ENCODE measurements at regions of chr7 and their contacts with region 1.

Region 1: DNA sequence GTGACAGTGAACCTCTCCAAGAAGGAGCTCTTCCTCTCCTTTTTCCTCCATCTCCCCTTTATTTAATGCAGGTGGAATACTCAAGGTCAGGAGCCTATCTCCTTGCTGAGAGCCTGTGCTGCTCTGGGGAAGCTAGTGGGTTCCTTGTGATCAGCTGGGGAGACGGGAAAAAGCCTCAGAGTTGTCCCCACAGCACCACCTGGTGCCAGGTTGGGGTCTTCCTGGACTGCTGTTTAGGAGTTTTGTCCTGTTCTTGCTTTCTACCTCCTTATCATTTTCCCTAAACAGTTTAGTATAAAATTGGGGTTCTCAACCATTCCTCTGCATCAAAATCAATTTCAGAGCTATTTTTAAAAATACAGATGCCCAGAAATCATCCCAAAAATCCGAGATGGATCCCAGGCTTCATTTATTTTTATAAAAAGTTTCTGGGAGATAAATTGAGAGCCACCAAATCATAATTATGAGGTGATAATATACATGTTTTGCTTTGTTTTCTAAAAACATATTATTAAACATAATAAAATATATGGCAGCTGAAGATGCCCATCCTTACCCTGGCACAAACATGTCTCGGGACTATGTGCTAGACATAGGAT is 44.3 kb downstream of the MACC1 start:
- DNase-seq: peak; percentile 70 to 72
- H3K4me3 ChIP-seq: no peak overlapping the region
- H3K27ac ChIP-seq: no peak overlapping the region
- H3K4me1 ChIP-seq: no peaks in the 10 kb centered on the region
- H3K27me3 ChIP-seq: no peaks in the 10 kb centered on the region
- CTCF ChIP-seq: peak; percentile 47 to 50

Region 2: DNA sequence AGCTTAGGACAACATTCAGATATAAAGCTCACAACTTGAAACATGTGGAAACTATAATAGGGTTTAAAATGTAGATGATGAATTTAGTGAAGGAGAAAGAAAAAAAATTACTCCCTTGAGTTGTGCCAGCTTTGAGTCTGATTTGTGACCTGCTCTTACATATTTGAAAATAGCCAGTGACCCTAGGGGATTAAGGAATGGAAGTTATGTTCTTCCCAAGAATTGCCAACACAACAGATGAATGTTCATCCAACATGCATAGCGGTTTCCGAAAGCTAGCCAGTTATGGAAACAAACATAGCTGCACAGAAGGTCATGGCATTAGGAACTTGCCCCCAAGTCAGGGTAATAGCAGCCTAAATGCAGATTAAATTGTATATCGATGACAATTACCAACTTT is 410.2 kb before region 1 on chr7:
- intact Hi-C with region 1: loop called (anchors 10 kb)
- DNase-seq: no peak
- H3K4me3 ChIP-seq: no peak overlapping the region
- H3K27ac ChIP-seq: no peak overlapping the region
- H3K4me1 ChIP-seq: peaks cover 0 to 15% (median 0%) of the 10 kb centered on the region in 4 donors
- H3K27me3 ChIP-seq: no peaks in the 10 kb centered on the region
- CTCF ChIP-seq: no peak

Measured in tibial artery (tissue), 4 donors.